Caco-2 (cell line): ENCODE measurements at regions of chr14 and their contacts with region 1.

Region 1: DNA sequence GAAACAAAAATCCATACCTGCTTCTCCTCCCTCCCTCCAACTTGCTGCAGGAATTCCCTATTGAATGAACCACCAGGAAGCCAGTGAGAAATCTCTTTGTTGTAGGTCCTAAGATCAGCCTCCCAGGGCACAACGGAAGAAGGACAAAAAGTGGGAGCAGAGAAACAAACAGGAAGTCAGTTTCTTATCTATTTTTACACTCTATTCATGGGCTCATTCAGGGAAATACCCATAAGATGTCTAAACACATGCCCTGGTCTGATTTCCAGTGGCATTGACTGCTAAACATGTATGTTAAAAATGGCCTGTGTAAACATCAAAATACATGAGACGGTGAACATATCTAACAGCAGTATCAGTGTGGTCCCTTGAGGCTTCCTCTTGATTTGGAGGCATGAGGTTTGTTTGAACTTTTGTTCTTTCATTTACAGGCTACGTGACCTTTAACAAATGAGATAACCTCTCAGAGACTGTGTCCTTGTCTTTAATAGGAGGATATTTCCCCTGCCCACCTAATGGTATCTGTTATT is 18.8 kb downstream of the GPR65 start:
- DNase-seq: no peak
- H3K4me3 ChIP-seq: no peak overlapping the region
- H3K4me3 Mint-ChIP-seq: no peak overlapping the region
- H3K27ac Mint-ChIP-seq: no peak overlapping the region
- H3K4me1 ChIP-seq: peaks cover 21% of the 10 kb centered on the region
- H3K4me1 Mint-ChIP-seq: peaks cover 22% of the 10 kb centered on the region
- H3K27me3 ChIP-seq: no peaks in the 10 kb centered on the region
- H3K27me3 Mint-ChIP-seq: peaks cover 10% of the 10 kb centered on the region
- CTCF ChIP-seq: no peak

Region 2: GRCh38 chr14:87368752-87369151 is 655.0 kb before region 1 on chr14:
- CTCF ChIA-PET with region 1: no interaction called
- POLR2A ChIA-PET with region 1: no interaction called
- intact Hi-C with region 1: no loop called
- DNase-seq: no peak
- H3K4me3 ChIP-seq: no peak overlapping the region
- H3K4me3 Mint-ChIP-seq: no peak overlapping the region
- H3K27ac Mint-ChIP-seq: no peak overlapping the region
- H3K4me1 ChIP-seq: no peaks in the 10 kb centered on the region
- H3K4me1 Mint-ChIP-seq: no peaks in the 10 kb centered on the region
- H3K27me3 ChIP-seq: no peaks in the 10 kb centered on the region
- H3K27me3 Mint-ChIP-seq: no peaks in the 10 kb centered on the region
- CTCF ChIP-seq: no peak

Region 3: DNA sequence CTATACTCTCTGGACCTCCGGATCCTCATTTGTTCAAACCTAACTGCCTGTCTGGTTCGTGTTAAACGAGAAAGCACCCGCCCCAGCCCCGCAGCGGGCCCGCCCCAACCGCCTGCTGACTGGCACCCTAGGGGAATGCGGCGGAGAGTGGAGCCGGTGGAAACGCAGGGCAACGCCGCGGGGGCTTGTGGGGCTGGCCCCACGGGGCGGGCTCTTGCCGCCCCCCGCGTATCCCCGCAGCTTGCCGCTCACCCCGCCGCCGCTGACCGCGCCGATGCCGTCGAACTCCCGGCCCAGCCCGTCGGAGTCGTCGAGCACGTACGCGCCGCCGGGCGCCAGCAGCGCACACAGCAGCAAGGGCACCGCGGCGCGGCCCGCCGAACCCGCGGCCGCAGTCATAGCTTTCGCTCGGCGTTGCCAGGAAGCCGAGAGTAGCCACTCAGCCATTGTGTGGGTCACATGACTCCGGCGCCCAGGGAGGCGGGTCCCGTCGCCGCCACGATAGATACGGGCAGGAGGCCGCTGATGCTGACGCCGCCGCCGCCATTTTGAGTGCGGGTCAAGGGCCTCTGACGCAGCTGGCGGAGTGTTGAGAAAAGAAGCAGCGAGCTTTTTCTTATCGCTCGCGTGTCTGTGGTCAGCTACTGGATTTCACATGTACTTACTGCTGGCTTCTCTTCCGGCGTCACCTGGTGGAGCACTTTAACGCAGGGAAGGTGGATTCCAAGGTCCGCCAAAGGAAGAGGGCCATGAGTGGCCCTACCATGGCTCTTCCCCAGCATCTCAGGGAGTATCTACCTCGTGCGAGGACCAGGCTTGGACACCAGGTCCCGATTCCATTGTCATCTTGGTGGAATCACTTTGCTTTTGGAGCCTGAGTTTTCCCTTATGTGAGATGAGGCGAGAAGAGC is 30.8 kb before region 1 on chr14 and contains the start of gene GALC:
- CTCF ChIA-PET with region 1: no interaction called
- POLR2A ChIA-PET with region 1: no interaction called
- intact Hi-C with region 1: loop called (anchors 1 kb)
- DNase-seq: peak; percentile 93
- H3K4me3 ChIP-seq: peak within 1 kb of the TSS; percentile 75
- H3K4me3 Mint-ChIP-seq: peak within 1 kb of the TSS; percentile 72
- H3K27ac Mint-ChIP-seq: peak within 1 kb of the TSS; percentile 90
- H3K4me1 ChIP-seq: peaks cover 17% of the 10 kb centered on the region
- H3K4me1 Mint-ChIP-seq: peaks cover 13% of the 10 kb centered on the region
- H3K27me3 ChIP-seq: no peaks in the 10 kb centered on the region
- H3K27me3 Mint-ChIP-seq: no peaks in the 10 kb centered on the region
- CTCF ChIP-seq: no peak
- total RNA-seq, gene GALC: 16.3 and 19.9 TPM in 2 replicates

Region 4: GRCh38 chr14:88044851-88045339 is 21.2 kb after region 1 on chr14:
- CTCF ChIA-PET with region 1: no interaction called
- POLR2A ChIA-PET with region 1: no interaction called
- intact Hi-C with region 1: loop called (anchors 1 kb)
- DNase-seq: no peak
- H3K4me3 ChIP-seq: no peak overlapping the region
- H3K4me3 Mint-ChIP-seq: no peak overlapping the region
- H3K27ac Mint-ChIP-seq: no peak overlapping the region
- H3K4me1 ChIP-seq: peaks cover 20% of the 10 kb centered on the region
- H3K4me1 Mint-ChIP-seq: peaks cover 12% of the 10 kb centered on the region
- H3K27me3 ChIP-seq: no peaks in the 10 kb centered on the region
- H3K27me3 Mint-ChIP-seq: no peaks in the 10 kb centered on the region
- CTCF ChIP-seq: no peak